HEK293 (cell line): ENCODE measurements at regions of chrX and their contacts with region 1.

Region 1: GRCh38 chrX:124406294-124407014 is 60.1 kb downstream of the SH2D1A start:
- H3K4me3 ChIP-seq: no peak overlapping the region
- H3K27ac ChIP-seq: no peak overlapping the region
- H3K4me1 ChIP-seq: no peaks in the 10 kb centered on the region
- CTCF ChIP-seq: 0 out of 2 replicates have a peak, but pooled peaks have one; percentile 10

Region 2: GRCh38 chrX:124393238-124393637 is 13.2 kb before region 1 on chrX:
- CTCF ChIA-PET with region 1: interaction called, 13 read pairs
- POLR2A ChIA-PET with region 1: no interaction called
- H3K4me3 ChIP-seq: no peak overlapping the region
- H3K27ac ChIP-seq: no peak overlapping the region
- H3K4me1 ChIP-seq: no peaks in the 10 kb centered on the region
- CTCF ChIP-seq: no peak

Region 3: GRCh38 chrX:125131164-125131563 is 724.7 kb after region 1 on chrX:
- CTCF ChIA-PET with region 1: interaction called, 12 read pairs
- POLR2A ChIA-PET with region 1: no interaction called
- H3K4me3 ChIP-seq: no peak overlapping the region
- H3K27ac ChIP-seq: no peak overlapping the region
- H3K4me1 ChIP-seq: no peaks in the 10 kb centered on the region
- CTCF ChIP-seq: no peak